ENCODE measurements at regions of chr15 and their contacts with region 1.

Region 1: DNA sequence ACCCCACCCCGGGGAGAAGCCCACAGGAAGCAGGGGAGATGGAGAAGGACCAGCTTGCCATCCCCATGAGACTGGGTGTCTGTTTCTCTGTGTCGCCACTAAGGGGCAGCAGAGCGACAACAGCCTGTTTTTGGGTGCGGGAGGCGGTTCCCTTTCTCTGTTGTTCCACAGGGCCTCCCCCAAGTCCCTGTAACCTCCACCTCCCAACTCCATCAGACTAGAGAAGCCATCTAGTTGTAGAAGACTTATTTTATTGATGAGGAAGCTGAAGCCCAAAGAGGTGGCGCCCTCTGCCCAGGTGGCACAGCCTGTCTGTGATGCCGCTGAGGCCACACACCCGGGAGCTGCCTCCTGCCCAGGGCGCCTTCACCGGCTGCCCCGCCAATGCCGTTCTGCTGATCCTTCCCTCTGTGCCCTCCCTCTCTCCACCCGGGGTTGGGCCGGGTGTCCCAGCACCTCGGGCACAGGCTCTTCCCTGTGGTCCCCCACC is 3.9 kb upstream of the CCDC9B start:
- DNase-seq: peak; percentile 80
- H3K4me3 Mint-ChIP-seq: no peak overlapping the region
- H3K27ac Mint-ChIP-seq: no peak overlapping the region
- H3K4me1 Mint-ChIP-seq: no peaks in the 10 kb centered on the region
- H3K27me3 Mint-ChIP-seq: no peaks in the 10 kb centered on the region

Region 2: GRCh38 chr15:40249482-40250303 is 95.0 kb before region 1 on chr15:
- CTCF ChIA-PET with region 1: no interaction called
- POLR2A ChIA-PET with region 1: no interaction called
- intact Hi-C with region 1: no loop called
- DNase-seq: no peak
- H3K4me3 Mint-ChIP-seq: no peak overlapping the region
- H3K27ac Mint-ChIP-seq: no peak overlapping the region
- H3K4me1 Mint-ChIP-seq: peaks cover 6% of the 10 kb centered on the region
- H3K27me3 Mint-ChIP-seq: peaks cover 25% of the 10 kb centered on the region

Region 3: DNA sequence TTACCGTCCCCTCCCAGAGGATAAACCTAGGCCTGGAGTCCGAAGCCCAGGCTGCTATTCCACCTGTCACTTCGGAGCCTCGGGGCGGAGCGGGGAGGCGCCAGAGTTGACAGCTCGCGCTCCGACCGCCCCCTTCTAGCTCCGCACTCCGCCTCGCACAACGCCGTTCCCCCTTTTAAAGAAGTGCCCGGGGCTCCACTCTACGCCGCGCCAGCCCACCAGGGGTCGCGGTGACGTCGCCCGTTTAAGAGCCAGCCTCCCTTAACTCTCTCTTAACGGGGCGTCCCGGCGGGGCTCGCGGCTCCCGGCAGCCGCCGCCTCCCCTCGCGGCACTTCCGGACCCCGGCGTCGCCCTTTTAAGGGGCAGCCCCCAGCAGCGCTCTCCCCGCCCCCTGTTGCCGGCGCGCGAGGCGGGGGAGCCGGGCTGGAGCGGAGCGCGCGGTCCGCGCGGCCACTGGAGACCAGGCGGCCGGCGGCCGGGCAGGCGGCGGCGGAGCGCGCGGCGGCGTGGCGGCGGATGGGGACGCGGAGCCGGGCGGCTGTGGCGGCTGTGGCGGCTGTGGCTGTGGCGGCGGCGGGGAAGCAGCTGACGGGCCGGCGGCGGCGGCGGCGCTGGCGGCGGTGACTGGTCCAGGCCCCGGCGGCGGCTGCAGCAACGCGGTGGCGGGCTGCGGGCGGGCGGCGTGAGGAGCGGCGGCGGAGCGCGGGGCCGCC is 21.3 kb before region 1 on chr15 and contains the start of gene INAFM2:
- CTCF ChIA-PET with region 1: interaction called, 111 read pairs
- POLR2A ChIA-PET with region 1: interaction called, 5 read pairs
- intact Hi-C with region 1: no loop called
- DNase-seq: peak; percentile 88
- H3K4me3 Mint-ChIP-seq: peak within 1 kb of the TSS; percentile 65
- H3K27ac Mint-ChIP-seq: no peak within 1 kb of the TSS
- H3K4me1 Mint-ChIP-seq: peaks cover 18% of the 10 kb centered on the region
- H3K27me3 Mint-ChIP-seq: no peaks in the 10 kb centered on the region
- total RNA-seq, gene INAFM2: 6.7 to 7.4 TPM

Region 4: DNA sequence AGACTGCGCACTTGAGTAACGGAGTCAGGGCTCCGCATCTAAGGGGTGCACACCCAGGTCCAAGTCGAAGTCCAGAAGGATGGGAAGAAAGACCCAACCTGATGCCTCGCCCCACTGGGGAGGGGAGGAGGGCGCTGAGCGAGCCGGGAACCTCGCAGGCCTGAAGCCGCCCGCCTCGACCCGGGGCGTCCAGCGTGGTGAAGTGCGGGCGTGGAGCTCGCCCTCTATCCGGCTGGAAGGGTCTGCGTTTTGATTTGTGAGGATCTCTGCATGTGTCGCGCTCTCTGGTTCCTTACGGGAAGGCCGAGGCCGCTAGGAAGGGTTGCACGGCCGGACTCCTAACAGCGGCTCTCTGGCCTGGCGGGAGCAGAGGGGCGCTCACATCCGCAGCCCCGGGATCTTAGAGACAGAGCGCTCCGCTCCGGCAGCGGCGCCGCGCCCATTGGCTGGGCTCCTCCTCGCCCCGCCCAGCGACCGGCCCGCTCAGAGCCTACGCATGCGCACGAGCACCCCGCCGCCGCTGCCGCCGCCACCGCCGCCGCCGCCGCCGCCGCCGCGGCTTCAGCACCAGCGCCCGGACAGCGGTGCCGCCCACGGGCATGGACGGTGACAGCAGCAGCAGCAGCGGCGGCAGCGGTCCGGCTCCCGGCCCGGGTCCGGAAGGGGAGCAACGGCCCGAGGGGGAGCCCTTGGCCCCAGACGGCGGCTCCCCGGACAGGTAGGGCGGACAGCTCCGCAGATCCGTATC is 13.2 kb after region 1 on chr15 and contains the start of gene DISP2:
- CTCF ChIA-PET with region 1: interaction called, 26 read pairs
- POLR2A ChIA-PET with region 1: no interaction called
- intact Hi-C with region 1: no loop called
- DNase-seq: peak; percentile 94
- H3K4me3 Mint-ChIP-seq: peak within 1 kb of the TSS; percentile 74
- H3K27ac Mint-ChIP-seq: no peak within 1 kb of the TSS
- H3K4me1 Mint-ChIP-seq: peaks cover 5% of the 10 kb centered on the region
- H3K27me3 Mint-ChIP-seq: no peaks in the 10 kb centered on the region
- total RNA-seq, gene DISP2: 0.02 to 0.05 TPM

Region 5: DNA sequence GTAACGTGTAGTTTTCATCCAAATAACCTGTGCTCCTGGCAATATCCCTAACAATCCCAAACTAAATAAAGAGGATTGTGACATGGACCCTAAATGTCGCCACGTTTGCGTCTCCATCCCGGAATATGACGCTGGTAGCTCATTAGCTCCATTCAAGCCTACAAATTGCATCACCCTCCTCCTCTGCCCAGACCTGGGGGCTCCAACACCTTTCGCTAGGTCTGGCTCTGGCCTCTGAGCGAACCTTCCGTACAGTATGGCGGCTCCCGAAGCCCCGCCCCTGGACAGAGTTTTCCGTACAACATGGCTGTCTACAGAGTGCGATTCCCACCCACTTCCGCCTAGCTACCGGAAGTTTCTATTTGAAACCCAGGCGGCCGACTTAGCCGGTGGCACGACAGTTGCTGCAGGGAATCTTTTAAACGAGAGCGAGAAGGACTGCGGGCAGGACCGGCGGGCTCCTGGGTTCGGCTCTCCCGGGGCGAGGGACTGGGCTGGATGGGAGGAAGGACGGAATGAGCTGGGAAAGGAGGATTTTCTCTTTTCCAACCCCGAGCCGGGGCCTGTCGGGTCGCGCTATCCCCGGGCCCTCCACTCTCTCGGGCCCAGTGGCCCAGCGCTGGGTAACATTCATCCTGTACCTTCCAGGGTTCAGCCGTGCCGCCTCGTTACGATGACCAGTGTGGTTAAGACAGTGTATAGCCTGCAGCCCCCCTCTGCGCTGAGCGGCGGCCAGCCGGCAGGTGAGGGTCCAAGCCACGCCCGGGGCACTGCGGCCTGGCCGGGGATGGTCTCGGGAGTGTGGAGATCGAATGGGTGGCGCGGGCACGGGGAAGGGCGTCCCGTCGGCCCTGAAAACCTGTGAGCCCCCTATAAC is 38.1 kb after region 1 on chr15 and contains the start of gene KNSTRN:
- CTCF ChIA-PET with region 1: interaction called, 15 read pairs
- POLR2A ChIA-PET with region 1: no interaction called
- intact Hi-C with region 1: no loop called
- DNase-seq: peak; percentile 95
- H3K4me3 Mint-ChIP-seq: peak within 1 kb of the TSS; percentile 87
- H3K27ac Mint-ChIP-seq: peak within 1 kb of the TSS; percentile 34
- H3K4me1 Mint-ChIP-seq: peaks cover 14% of the 10 kb centered on the region
- H3K27me3 Mint-ChIP-seq: no peaks in the 10 kb centered on the region
- total RNA-seq, gene KNSTRN: 59.8 to 61.5 TPM

Region 6: DNA sequence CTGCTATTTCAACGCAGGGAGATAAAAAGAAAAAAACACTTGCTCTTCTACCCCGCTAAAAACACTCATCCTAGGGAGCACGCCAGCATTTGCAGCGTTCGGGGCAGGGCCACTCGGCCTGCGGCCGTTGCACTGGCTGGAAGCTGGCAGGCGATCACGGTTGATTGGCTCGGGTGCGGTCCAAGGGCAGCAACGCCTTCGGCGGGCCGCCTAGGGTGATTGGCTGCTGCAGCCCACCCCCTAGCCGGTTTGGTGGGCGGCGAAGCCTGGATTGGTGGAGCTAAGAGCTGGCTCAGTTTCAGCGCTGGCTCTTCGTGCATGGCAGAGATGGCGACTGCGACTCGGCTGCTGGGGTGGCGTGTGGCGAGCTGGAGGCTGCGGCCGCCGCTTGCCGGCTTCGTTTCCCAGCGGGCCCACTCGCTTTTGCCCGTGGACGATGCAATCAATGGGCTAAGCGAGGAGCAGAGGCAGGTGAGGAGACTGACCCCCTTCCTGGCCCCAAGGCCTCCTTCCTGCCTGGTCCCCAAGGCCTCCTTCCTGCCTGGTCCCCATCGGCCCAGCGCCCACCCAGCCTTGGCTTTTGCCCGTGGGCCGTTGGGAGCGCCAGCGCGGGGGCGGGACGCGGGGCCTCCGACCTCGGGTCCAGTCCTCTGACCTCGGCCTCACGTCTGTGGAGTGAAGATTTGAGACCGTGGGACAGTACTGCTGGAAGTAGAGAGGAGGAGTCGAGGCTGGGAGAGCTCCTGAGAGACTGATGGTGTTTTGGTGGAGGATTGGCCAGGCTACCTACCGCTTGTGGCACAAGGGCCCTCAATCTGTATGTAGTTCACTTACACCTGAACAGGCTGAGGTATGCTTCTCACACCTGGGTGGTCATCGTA is 61.1 kb after region 1 on chr15 and contains the start of gene IVD:
- CTCF ChIA-PET with region 1: interaction called, 15 read pairs
- POLR2A ChIA-PET with region 1: no interaction called
- intact Hi-C with region 1: no loop called
- DNase-seq: peak; percentile 95
- H3K4me3 Mint-ChIP-seq: peak within 1 kb of the TSS; percentile 69
- H3K27ac Mint-ChIP-seq: peak within 1 kb of the TSS; percentile 65
- H3K4me1 Mint-ChIP-seq: peaks cover 49% of the 10 kb centered on the region
- H3K27me3 Mint-ChIP-seq: no peaks in the 10 kb centered on the region
- total RNA-seq, gene IVD: 37.3 to 38.7 TPM

Region 7: DNA sequence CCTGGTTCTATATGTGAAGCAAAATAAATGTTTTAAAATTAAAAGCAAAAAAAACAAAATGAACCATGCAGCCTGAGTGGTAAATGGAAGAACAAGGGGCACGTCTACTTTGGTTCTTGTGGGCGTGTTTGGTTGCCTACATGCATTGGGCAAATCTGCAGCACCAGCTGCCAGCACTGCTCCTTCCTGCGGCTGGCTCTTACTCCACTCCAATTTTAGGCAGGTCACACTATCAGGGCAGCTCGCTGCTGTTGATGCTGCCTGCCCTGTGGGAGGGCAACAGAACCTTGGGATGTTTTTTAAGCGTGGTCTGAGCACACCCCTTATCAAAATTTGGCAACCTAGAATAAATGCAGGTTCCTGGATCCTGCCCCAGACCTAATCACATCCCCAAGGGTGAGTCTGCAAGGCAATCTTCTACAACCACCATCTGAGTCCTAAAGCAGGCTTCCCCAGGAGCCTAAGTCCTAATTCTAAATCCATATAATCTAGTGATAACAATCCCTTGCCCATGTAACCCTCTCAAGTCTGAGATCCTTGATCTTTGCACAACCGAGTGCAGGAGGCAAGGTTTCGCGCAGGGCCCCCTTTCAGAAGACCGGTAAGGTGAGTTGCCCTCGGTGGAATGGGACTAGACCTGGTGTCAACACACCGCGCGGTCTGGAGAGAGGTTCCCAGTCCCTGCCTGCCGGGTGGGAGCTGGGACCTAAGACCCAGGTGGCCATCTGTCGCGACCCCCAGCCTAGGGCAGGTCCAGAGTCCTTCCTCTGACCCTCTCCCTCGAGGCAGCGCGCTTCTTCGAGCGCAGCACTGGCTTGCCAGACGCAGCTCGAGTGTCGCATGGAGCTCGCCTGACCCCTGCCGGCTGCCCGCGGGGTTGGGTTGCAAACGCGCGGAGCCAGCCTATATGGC is 76.8 kb after region 1 on chr15:
- CTCF ChIA-PET with region 1: interaction called, 216 read pairs
- POLR2A ChIA-PET with region 1: no interaction called
- intact Hi-C with region 1: loop called (anchors 1 kb)
- DNase-seq: peak; percentile 87
- H3K4me3 Mint-ChIP-seq: no peak overlapping the region
- H3K27ac Mint-ChIP-seq: no peak overlapping the region
- H3K4me1 Mint-ChIP-seq: no peaks in the 10 kb centered on the region
- H3K27me3 Mint-ChIP-seq: no peaks in the 10 kb centered on the region

Region 8: DNA sequence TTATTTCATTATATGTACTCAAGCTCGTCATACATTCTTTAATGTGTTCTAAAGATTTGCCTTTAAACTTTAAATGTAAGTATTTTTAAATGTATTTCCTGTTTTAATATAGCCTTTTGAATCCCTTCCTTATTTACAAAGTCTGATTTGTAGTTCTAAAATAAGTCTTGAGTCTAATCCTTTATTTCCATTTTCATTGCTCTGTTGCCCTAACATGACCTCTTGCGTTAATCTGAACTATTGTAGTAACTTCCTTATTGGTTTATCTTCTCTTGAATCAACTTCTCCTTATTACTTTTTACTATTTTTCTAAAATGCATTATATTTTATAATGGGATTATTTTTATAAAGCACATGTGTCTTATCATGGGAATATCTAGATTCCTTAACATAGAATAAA is 273.3 kb after region 1 on chr15:
- CTCF ChIA-PET with region 1: no interaction called
- POLR2A ChIA-PET with region 1: no interaction called
- intact Hi-C with region 1: no loop called
- DNase-seq: no peak
- H3K4me3 Mint-ChIP-seq: no peak overlapping the region
- H3K27ac Mint-ChIP-seq: no peak overlapping the region
- H3K4me1 Mint-ChIP-seq: no peaks in the 10 kb centered on the region
- H3K27me3 Mint-ChIP-seq: no peaks in the 10 kb centered on the region

Measured in activated CD4-positive, alpha-beta memory T cell treated with anti-CD3 and anti-CD28 coated beads for 36 hours (primary cell).